Prostate gland (tissue), 2 donors: ENCODE measurements at regions of chrX and their contacts with region 1.

Region 1: GRCh38 chrX:65985922-65986588 is 53.8 kb downstream of the VSIG4 start:
- DNase-seq: peak; percentile 20
- H3K4me3 ChIP-seq: no peak overlapping the region
- H3K27ac ChIP-seq: no peak overlapping the region
- H3K4me1 ChIP-seq: no peaks in the 10 kb centered on the region
- H3K27me3 ChIP-seq: no peaks in the 10 kb centered on the region
- CTCF ChIP-seq: peak in 3 of 4 experiments; percentile 33 to 60 (median 48)
- POLR2A ChIP-seq: no peak

Region 2: DNA sequence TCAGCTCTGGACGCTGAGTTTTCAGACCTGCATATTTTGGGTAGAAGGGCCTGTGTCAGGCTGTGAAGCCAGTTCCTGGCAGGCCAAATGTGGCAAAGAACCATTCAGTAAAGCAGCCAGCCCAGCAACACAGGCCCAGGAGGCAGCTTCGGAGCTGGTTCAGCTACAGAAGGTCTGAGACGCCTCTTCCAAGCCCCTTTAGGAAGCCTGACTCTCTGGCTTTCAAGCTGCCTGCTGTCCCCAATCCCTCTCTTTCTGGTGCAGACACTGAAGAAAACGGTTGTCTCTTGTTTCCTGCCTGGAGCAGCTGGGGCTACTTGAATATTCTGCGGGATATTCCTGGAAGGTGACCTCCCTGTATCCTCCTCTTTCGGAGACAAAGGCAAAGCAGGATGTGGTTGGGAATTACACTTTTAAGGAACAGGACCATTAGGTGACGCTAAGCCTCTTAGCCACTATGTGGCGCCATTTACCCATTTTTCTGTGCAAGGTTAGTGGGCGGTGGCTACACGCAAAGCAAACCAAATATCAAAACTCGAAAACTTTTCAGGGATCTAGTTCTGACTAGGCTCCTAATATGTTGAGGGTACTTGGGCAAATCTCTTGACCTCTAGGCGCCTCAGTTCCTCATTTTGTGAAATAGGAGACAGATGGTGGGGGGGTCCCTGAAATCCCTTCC is 404.3 kb before region 1 on chrX:
- intact Hi-C with region 1: loop called (anchors 5 kb)
- DNase-seq: peak; percentile 32
- H3K4me3 ChIP-seq: no peak overlapping the region
- H3K27ac ChIP-seq: no peak overlapping the region
- H3K4me1 ChIP-seq: no peaks in the 10 kb centered on the region
- H3K27me3 ChIP-seq: no peaks in the 10 kb centered on the region
- CTCF ChIP-seq: peak in 3 of 4 experiments; percentile 63 to 72 (median 71)
- POLR2A ChIP-seq: no peak

Region 3: GRCh38 chrX:65871661-65872311 is 114.3 kb before region 1 on chrX:
- intact Hi-C with region 1: no loop called
- DNase-seq: no peak
- H3K4me3 ChIP-seq: no peak overlapping the region
- H3K27ac ChIP-seq: no peak overlapping the region
- H3K4me1 ChIP-seq: no peaks in the 10 kb centered on the region
- H3K27me3 ChIP-seq: no peaks in the 10 kb centered on the region
- CTCF ChIP-seq: no peak
- POLR2A ChIP-seq: no peak